MCF 10A (cell line): ENCODE measurements at regions of chr2 and their contacts with region 1.

Region 1: DNA sequence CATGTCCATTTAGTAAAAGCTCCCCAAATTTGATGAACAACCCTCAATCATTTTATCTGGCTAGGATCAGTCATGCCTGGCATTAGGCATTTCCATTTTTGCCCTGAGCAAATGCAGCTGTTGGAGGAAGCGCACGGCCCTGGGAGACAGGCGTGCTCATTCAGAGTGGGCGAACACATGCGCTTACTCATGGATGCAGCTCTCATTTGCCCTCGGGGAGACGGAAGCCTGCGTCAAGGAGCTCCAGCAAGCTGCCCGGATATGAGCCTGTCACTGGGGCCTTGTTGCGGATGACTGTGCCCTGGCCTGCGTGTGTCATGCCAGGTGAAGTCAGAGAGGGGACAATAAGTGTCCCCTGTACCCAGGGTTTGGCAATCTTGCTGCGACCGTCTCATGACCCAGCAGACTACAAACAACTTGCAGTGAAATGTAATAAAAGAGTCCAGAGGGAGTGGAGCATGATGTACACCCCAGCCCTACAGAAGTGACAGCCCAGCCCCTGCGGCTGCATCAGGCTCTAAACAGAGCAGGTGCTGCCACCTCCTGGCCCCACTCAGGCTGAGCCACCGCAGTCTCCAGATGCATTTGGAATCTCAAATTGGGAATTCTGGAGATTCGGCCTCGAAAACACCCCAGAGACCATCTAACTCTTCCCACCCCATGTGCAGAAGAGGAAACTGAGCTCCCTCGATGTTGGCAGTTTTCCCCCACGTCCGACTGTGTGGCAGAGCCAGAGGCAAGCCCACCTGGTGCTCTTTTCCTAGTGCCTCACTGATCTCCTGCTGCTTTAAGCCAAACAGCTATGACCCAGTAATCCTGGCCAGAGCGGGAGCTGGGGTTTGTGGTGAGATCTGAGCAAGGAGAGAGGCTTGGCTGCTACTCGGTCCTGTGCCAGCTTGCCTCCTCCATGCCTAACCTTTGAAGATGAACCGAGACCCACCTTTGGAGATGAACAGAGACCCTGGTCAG is 105.0 kb upstream of the ALK start:
- DNase-seq: peak; percentile 79
- H3K4me3 Mint-ChIP-seq: no peak overlapping the region
- H3K27ac Mint-ChIP-seq: no peak overlapping the region
- H3K4me1 Mint-ChIP-seq: no peaks in the 10 kb centered on the region
- H3K27me3 Mint-ChIP-seq: peaks cover 39% of the 10 kb centered on the region
- CTCF ChIP-seq: peak; percentile 71

Region 2: DNA sequence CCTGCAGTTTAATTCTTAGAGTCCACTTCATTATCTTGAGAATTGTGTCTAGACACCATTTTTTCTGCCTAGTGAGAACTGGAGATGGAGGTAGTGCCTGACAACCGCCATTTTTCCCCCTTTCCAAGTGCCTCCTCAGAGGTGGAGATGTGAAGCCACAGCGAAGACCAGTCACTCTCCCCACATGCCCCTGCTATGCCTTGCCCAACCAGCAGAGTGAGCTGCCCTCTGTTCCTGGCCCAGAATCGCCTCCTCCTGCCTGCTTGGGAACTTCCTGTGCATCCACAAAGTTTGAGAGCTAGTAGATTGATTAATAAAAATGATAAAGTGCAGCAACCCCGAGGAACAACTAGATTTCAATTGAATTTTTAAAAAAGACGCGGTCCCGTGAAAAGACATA is 787.9 kb before region 1 on chr2:
- CTCF ChIA-PET with region 1: interaction called, 4 read pairs
- POLR2A ChIA-PET with region 1: no interaction called
- intact Hi-C with region 1: loop called (anchors 10 kb)
- DNase-seq: peak; percentile 64
- H3K4me3 Mint-ChIP-seq: no peak overlapping the region
- H3K27ac Mint-ChIP-seq: no peak overlapping the region
- H3K4me1 Mint-ChIP-seq: no peaks in the 10 kb centered on the region
- H3K27me3 Mint-ChIP-seq: peaks cover 74% of the 10 kb centered on the region
- CTCF ChIP-seq: peak; percentile 76

Region 3: DNA sequence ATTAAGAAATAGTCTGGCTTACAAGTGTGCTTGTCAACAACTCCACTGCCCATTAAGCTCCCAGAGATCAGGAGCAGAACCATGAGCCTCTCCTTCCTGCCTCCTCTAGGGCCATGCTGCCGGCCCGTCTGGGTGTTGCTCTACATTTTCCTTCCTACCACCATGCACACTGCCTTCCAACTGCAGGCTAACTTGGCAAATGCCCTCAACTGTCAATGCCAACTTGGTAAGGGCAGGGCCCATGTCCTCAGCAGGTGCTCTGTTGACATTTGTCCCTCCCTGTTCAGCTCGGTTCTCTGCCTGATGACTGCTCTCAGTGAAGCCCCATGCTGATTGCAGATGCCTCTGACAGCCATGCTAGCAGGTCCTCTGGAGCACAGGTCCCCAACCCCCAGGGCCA is 450.1 kb before region 1 on chr2:
- CTCF ChIA-PET with region 1: no interaction called
- POLR2A ChIA-PET with region 1: no interaction called
- intact Hi-C with region 1: no loop called
- DNase-seq: no peak
- H3K4me3 Mint-ChIP-seq: no peak overlapping the region
- H3K27ac Mint-ChIP-seq: no peak overlapping the region
- H3K4me1 Mint-ChIP-seq: no peaks in the 10 kb centered on the region
- H3K27me3 Mint-ChIP-seq: peaks cover 11% of the 10 kb centered on the region
- CTCF ChIP-seq: no peak

Region 4: GRCh38 chr2:29923110-29923721 is 103.2 kb before region 1 on chr2:
- CTCF ChIA-PET with region 1: interaction called, 247 read pairs
- POLR2A ChIA-PET with region 1: interaction called, 5 read pairs
- intact Hi-C with region 1: no loop called
- DNase-seq: peak; percentile 83
- H3K4me3 Mint-ChIP-seq: no peak overlapping the region
- H3K27ac Mint-ChIP-seq: no peak overlapping the region
- H3K4me1 Mint-ChIP-seq: no peaks in the 10 kb centered on the region
- H3K27me3 Mint-ChIP-seq: peaks cover 42% of the 10 kb centered on the region
- CTCF ChIP-seq: peak; percentile 86

Region 5: DNA sequence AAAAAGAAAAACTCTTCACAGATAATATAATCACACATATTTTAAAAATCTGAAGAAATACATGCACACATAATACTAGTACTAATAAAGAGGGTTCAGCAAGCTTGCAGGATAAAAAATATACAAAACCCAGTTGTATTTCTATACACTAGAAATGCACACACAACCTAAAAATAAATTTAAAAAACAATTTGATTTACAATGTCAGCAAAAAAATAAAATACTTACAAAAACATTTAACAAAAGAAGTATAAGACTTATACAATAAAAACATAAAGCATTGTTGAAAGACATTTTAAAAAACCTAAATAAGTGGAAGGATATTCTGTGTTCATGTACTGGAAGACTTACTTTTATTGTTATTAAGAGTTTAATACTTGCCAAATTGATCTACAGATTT is 23.2 kb before region 1 on chr2:
- CTCF ChIA-PET with region 1: interaction called, 13 read pairs
- POLR2A ChIA-PET with region 1: interaction called, 3 read pairs
- intact Hi-C with region 1: no loop called
- DNase-seq: no peak
- H3K4me3 Mint-ChIP-seq: no peak overlapping the region
- H3K27ac Mint-ChIP-seq: no peak overlapping the region
- H3K4me1 Mint-ChIP-seq: no peaks in the 10 kb centered on the region
- H3K27me3 Mint-ChIP-seq: peaks cover 32% of the 10 kb centered on the region
- CTCF ChIP-seq: no peak

Region 6: GRCh38 chr2:30055548-30055947 is 29.2 kb after region 1 on chr2:
- CTCF ChIA-PET with region 1: interaction called, 12 read pairs
- POLR2A ChIA-PET with region 1: no interaction called
- intact Hi-C with region 1: no loop called
- DNase-seq: no peak
- H3K4me3 Mint-ChIP-seq: no peak overlapping the region
- H3K27ac Mint-ChIP-seq: no peak overlapping the region
- H3K4me1 Mint-ChIP-seq: no peaks in the 10 kb centered on the region
- H3K27me3 Mint-ChIP-seq: peaks cover 59% of the 10 kb centered on the region
- CTCF ChIP-seq: no peak

Region 7: GRCh38 chr2:30165050-30165520 is 138.7 kb after region 1 on chr2:
- CTCF ChIA-PET with region 1: no interaction called
- POLR2A ChIA-PET with region 1: no interaction called
- intact Hi-C with region 1: no loop called
- DNase-seq: peak; percentile 90
- H3K4me3 Mint-ChIP-seq: no peak overlapping the region
- H3K27ac Mint-ChIP-seq: no peak overlapping the region
- H3K4me1 Mint-ChIP-seq: peaks cover 31% of the 10 kb centered on the region
- H3K27me3 Mint-ChIP-seq: no peaks in the 10 kb centered on the region
- CTCF ChIP-seq: peak; percentile 59